Calu3 (cell line): ENCODE measurements at regions of chr3 and their contacts with region 1.

Region 1: GRCh38 chr3:137692803-137693431 is 71.2 kb upstream of the SOX14 start:
- DNase-seq: peak; percentile 68
- H3K4me3 Mint-ChIP-seq: no peak overlapping the region
- H3K27ac Mint-ChIP-seq: no peak overlapping the region
- H3K4me1 Mint-ChIP-seq: no peaks in the 10 kb centered on the region
- H3K27me3 Mint-ChIP-seq: peaks cover 18% of the 10 kb centered on the region
- CTCF ChIP-seq: peak; percentile 47

Region 2: GRCh38 chr3:137032465-137033120 is 660.3 kb before region 1 on chr3:
- CTCF ChIA-PET with region 1: no interaction called
- intact Hi-C with region 1: loop called (anchors 1 kb)
- DNase-seq: peak; percentile 98
- H3K4me3 Mint-ChIP-seq: peak overlapping the region; percentile 66
- H3K27ac Mint-ChIP-seq: no peak overlapping the region
- H3K4me1 Mint-ChIP-seq: peaks cover 17% of the 10 kb centered on the region
- H3K27me3 Mint-ChIP-seq: peaks cover 7% of the 10 kb centered on the region
- CTCF ChIP-seq: peak; percentile 99

Region 3: GRCh38 chr3:137724240-137724639 is 31.3 kb after region 1 on chr3:
- CTCF ChIA-PET with region 1: no interaction called
- intact Hi-C with region 1: no loop called
- DNase-seq: no peak
- H3K4me3 Mint-ChIP-seq: no peak overlapping the region
- H3K27ac Mint-ChIP-seq: no peak overlapping the region
- H3K4me1 Mint-ChIP-seq: no peaks in the 10 kb centered on the region
- H3K27me3 Mint-ChIP-seq: no peaks in the 10 kb centered on the region
- CTCF ChIP-seq: no peak

Region 4: DNA sequence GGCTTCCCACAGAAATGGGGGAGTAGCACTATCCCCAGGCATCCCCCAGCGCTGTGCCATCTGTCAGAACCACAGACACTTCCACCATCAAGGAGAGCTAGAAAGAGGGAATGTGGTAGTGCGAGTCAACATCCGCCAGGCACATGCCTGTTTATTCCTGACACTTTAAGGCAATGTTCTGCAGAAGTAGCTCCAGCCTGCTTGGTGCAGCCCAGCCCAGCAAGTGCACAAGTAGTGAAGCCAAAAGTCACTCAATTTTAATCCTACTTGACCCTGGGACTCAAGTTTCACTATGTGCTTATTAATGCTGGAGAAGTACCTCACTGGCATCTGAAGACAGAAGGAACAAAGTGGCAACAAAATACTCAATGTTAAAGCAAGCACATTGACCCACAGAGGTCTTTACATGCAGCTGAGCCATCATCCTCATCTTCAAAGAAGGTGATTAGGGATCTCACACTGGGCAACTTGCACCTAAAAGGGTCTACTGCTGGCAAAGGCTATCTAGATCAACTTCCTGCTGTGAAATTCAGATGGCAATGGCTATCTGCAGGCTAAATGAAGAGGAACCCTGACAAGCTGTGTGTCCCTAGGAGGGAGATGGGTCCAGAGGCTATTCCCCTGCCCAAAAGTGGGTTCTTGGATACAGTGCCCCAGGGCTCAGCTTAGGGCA is 255.6 kb after region 1 on chr3:
- CTCF ChIA-PET with region 1: no interaction called
- intact Hi-C with region 1: no loop called
- DNase-seq: no peak
- H3K4me3 Mint-ChIP-seq: no peak overlapping the region
- H3K27ac Mint-ChIP-seq: no peak overlapping the region
- H3K4me1 Mint-ChIP-seq: peaks cover 7% of the 10 kb centered on the region
- H3K27me3 Mint-ChIP-seq: peaks cover 13% of the 10 kb centered on the region
- CTCF ChIP-seq: no peak